ENCODE measurements at regions of chr17 and their contacts with region 1.

Region 1: DNA sequence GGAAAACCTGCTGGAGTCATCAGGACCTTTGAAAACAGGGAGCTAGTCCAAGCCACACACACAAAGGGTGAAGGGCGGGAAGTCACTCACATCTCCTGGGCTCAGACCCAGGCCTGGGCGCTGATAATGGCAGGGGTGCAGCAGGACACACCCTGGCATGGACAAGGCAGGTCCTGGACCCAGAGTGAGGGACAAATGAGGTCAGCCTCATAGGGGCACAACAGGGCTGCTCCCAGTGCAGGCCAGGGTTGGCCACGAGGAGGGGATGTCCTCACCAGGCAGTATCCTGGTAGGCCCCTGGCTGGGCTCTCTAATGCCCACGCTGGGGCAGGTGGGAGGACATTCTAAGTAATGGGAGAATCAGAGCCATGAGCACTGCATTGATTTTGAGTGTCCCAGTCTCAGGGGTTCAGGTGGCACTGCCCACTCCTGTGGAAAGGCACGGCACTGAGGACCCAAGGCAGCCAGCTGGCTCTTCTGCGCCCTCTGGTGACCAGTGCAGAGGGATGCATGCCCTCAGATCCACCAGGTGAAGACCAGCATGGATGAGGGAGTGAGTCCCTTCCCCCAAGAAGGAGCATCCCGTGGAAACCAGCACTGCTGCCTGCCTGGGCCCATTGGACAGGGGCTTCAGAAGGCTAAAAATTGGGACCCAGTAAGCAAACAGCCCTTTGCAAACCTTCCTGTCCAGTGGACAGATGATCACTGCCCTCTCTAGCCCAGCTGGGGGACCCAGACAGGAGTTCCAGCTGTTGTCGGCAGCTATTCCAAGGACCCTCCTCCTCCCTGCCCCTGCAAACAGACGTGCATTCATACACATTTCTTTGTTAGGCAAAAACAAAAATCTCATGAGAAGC is 23.4 kb upstream of the SREBF1 start:
- DNase-seq: peak in 1 of 2 experiments; percentile 72
- H3K4me3 ChIP-seq: no peak overlapping the region
- H3K27ac ChIP-seq: no peak overlapping the region
- H3K4me1 ChIP-seq: peaks cover 19% of the 10 kb centered on the region
- H3K27me3 ChIP-seq: no peaks in the 10 kb centered on the region
- CTCF ChIP-seq: peak; percentile 98

Region 2: GRCh38 chr17:17729620-17730249 is 130.4 kb before region 1 on chr17:
- CTCF ChIA-PET with region 1: no interaction called
- POLR2A ChIA-PET with region 1: no interaction called
- intact Hi-C with region 1: loop called (anchors 5 kb)
- DNase-seq: peak; percentile 66 to 72
- H3K4me3 ChIP-seq: peak overlapping the region; percentile 13; the same call in 1 of the 2 replicates
- H3K27ac ChIP-seq: peak overlapping the region; percentile 40; the same call in 1 of the 2 replicates
- H3K4me1 ChIP-seq: peaks cover 74% of the 10 kb centered on the region
- H3K27me3 ChIP-seq: no peaks in the 10 kb centered on the region
- CTCF ChIP-seq: peak; percentile 86

Region 3: DNA sequence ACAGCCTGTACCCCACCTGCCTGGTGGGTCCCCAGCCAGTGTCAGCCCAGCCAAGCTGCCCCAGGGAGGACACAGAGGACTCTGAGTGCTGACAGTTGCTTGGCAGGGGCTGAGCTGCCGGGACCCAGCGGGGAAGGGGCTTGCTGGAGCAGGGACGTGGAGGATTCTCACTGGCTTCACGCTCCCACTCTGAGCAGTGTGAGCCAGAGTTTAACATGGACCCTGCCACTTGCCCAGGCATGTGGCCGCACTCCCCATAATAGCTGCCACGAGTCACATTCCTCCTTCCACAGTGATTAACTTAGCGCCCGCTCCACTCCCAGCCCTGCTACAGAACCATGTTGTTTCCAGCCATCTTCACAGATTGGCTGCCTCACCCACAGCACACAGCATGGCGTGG is 54.6 kb before region 1 on chr17:
- CTCF ChIA-PET with region 1: interaction called, 14 read pairs
- POLR2A ChIA-PET with region 1: no interaction called
- intact Hi-C with region 1: no loop called
- DNase-seq: no peak
- H3K4me3 ChIP-seq: no peak overlapping the region
- H3K27ac ChIP-seq: no peak overlapping the region
- H3K4me1 ChIP-seq: 0 out of 2 replicates have a peak, but pooled peaks cover 7% of the 10 kb centered on the region
- H3K27me3 ChIP-seq: no peaks in the 10 kb centered on the region
- CTCF ChIP-seq: no peak

Region 4: GRCh38 chr17:17935321-17936271 is 75.5 kb after region 1 on chr17:
- CTCF ChIA-PET with region 1: interaction called, 12 read pairs
- POLR2A ChIA-PET with region 1: no interaction called
- intact Hi-C with region 1: no loop called
- DNase-seq: peak; percentile 64 to 93
- H3K4me3 ChIP-seq: 0 out of 2 replicates have a peak overlapping the region, but pooled peaks have one; percentile 11
- H3K27ac ChIP-seq: peak overlapping the region; percentile 65
- H3K4me1 ChIP-seq: peaks cover 37% of the 10 kb centered on the region
- H3K27me3 ChIP-seq: no peaks in the 10 kb centered on the region
- CTCF ChIP-seq: no peak